ENCODE measurements at regions of chr9 and their contacts with region 1.

Region 1: GRCh38 chr9:37575921-37576721 is at the start of gene FBXO10:
- DNase-seq: no peak
- ATAC-seq: peak; percentile 96
- H3K4me3 ChIP-seq: peak within 1 kb of the TSS; percentile 72 to 90
- H3K27ac ChIP-seq: peak within 1 kb of the TSS; percentile 92
- H3K4me1 ChIP-seq: peaks cover 32% of the 10 kb centered on the region
- H3K27me3 ChIP-seq: no peaks in the 10 kb centered on the region
- CTCF ChIP-seq: no peak
- total RNA-seq, gene FBXO10: 39.8 TPM

Region 2: DNA sequence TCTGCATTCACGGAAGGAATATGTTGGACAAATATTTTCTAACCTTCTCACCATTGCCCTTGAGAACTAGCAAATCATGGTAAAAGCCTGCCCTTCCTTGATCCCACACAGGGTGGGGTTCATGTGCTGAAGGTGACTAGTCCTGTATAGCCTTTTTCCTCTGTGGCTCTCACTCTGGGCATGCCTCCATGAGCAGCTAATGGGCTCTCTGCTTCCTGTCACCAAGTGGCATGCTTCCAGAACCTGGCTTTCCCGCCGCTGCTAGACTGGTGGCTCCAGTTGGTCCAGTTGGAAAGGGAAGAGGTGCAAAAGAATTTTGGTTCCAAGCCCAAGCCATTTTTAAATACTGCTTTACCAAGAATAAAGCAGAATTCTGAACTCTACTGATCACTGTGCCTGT is 35.5 kb before region 1 on chr9:
- CTCF ChIA-PET with region 1: no interaction called
- POLR2A ChIA-PET with region 1: no interaction called
- in situ Hi-C with region 1: no loop called
- intact Hi-C with region 1: no loop called
- DNase-seq: no peak
- ATAC-seq: no peak
- H3K4me3 ChIP-seq: no peak overlapping the region
- H3K27ac ChIP-seq: no peak overlapping the region
- H3K4me1 ChIP-seq: no peaks in the 10 kb centered on the region
- H3K27me3 ChIP-seq: no peaks in the 10 kb centered on the region
- CTCF ChIP-seq: no peak

Region 3: GRCh38 chr9:37555786-37556185 is 20.3 kb before region 1 on chr9:
- CTCF ChIA-PET with region 1: no interaction called
- POLR2A ChIA-PET with region 1: interaction called, 10 read pairs
- in situ Hi-C with region 1: no loop called
- intact Hi-C with region 1: no loop called
- DNase-seq: no peak
- ATAC-seq: no peak
- H3K4me3 ChIP-seq: no peak overlapping the region
- H3K27ac ChIP-seq: no peak overlapping the region
- H3K4me1 ChIP-seq: peaks cover 9% of the 10 kb centered on the region
- H3K27me3 ChIP-seq: no peaks in the 10 kb centered on the region
- CTCF ChIP-seq: no peak

Region 4: GRCh38 chr9:37592108-37592951 is 16.2 kb after region 1 on chr9 and contains the start of gene TOMM5:
- CTCF ChIA-PET with region 1: no interaction called
- POLR2A ChIA-PET with region 1: interaction called, 18 read pairs
- in situ Hi-C with region 1: no loop called
- intact Hi-C with region 1: no loop called
- DNase-seq: peak; percentile 92
- ATAC-seq: peak; percentile 97
- H3K4me3 ChIP-seq: peak within 1 kb of the TSS; percentile 74 to 95
- H3K27ac ChIP-seq: peak within 1 kb of the TSS; percentile 94
- H3K4me1 ChIP-seq: peaks cover 26% of the 10 kb centered on the region
- H3K27me3 ChIP-seq: peaks cover 17% of the 10 kb centered on the region
- CTCF ChIP-seq: no peak
- total RNA-seq, gene TOMM5: 333 TPM

Region 5: DNA sequence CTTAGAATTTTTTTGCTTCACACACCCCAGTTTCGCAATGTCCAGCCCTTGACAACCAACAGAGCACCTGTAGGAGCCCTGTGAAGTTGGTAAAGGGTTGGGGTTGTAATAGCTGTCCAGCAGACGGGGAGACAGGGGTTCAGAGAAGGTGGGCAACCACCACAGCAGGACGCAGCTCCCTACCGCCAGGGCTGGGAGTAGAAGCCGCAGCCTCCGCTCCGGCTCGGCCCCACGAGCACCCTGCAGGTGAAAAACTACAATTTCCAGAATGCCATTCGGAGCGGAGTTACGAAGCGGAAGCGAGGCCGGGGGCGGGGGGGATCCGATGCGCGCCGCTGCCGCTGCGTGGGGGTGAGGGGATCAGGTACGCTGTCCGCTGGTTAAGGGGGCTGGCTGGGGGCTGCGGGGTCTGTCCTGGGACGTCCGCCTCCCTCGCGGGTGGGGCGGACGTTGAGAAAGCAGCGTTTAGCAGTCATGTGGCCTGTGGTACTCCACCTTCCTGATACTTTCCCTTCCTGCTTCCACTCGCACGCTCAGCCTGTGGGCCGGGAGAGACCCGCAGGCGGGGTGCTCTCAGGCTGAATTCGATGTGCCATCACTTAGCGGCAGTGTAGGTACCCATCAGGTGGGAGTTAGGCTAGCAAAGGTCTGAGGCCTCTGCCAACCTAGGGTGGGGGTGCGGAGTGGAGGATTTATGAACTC is 177.5 kb after region 1 on chr9 and contains the start of gene TRMT10B:
- CTCF ChIA-PET with region 1: no interaction called
- POLR2A ChIA-PET with region 1: interaction called, 13 read pairs
- in situ Hi-C with region 1: no loop called
- intact Hi-C with region 1: no loop called
- DNase-seq: no peak
- ATAC-seq: peak; percentile 96
- H3K4me3 ChIP-seq: peak within 1 kb of the TSS; percentile 81 to 95
- H3K27ac ChIP-seq: peak within 1 kb of the TSS; percentile 98
- H3K4me1 ChIP-seq: peaks cover 8% of the 10 kb centered on the region
- H3K27me3 ChIP-seq: no peaks in the 10 kb centered on the region
- CTCF ChIP-seq: no peak
- total RNA-seq, gene TRMT10B: 9.8 TPM

Measured in Panc1 (cell line).